ENCODE measurements at regions of chr7 and their contacts with region 1.

Region 1: DNA sequence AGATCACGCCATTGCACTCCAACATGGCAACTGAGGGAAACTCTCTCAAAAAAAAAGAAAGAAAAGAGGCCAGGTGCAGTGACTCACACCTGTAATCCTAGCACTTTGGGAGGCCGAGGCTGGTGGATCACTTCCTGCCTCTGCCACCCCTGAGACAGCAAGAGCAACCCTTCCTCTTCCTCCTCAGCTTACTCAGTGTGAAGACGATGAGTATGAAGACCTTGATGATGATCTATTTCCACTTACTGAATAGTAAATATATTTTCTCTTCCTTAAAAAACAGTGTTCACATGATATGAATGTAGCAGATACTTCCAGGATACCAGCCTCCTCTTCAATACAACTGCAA is 2.1 kb upstream of the ZKSCAN1 start:
- DNase-seq: no peak
- ATAC-seq: no peak
- H3K4me3 ChIP-seq: no peak overlapping the region
- H3K27ac ChIP-seq: no peak overlapping the region
- H3K4me1 ChIP-seq: peaks cover 17% of the 10 kb centered on the region
- H3K27me3 ChIP-seq: no peaks in the 10 kb centered on the region
- CTCF ChIP-seq: no peak

Region 2: GRCh38 chr7:100049441-100050311 is 36.4 kb after region 1 on chr7 and contains the start of gene ZSCAN21:
- intact Hi-C with region 1: loop called in 1 of 2 experiments (anchors 2 kb)
- DNase-seq: peak; percentile 90 to 94
- ATAC-seq: peak; percentile 95 to 98 (median 96)
- H3K4me3 ChIP-seq: peak within 1 kb of the TSS; percentile 94
- H3K27ac ChIP-seq: peak within 1 kb of the TSS; percentile 98
- H3K4me1 ChIP-seq: peaks cover 6% of the 10 kb centered on the region
- H3K27me3 ChIP-seq: no peaks in the 10 kb centered on the region
- CTCF ChIP-seq: no peak
- total RNA-seq, gene ZSCAN21: 9.9 to 20.3 (median 11.7) TPM

Measured in psoas muscle (tissue), 8 donors.